Right cardiac atrium (tissue), 5 donors: ENCODE measurements at regions of chr6 and their contacts with region 1.

Region 1: GRCh38 chr6:133923938-133924593 is 29.0 kb upstream of the TBPL1 start:
- DNase-seq: peak; percentile 34 to 69 (median 58)
- ATAC-seq: peak; percentile 90 to 93
- H3K4me3 ChIP-seq: no peak overlapping the region
- H3K27ac ChIP-seq: no peak overlapping the region
- H3K4me1 ChIP-seq: no peaks in the 10 kb centered on the region
- H3K27me3 ChIP-seq: no peaks in the 10 kb centered on the region

Region 2: GRCh38 chr6:133906050-133906449 is 18.0 kb before region 1 on chr6:
- intact Hi-C with region 1: no loop called
- DNase-seq: no peak
- ATAC-seq: no peak
- H3K4me3 ChIP-seq: no peak overlapping the region
- H3K27ac ChIP-seq: no peak overlapping the region
- H3K4me1 ChIP-seq: no peaks in the 10 kb centered on the region
- H3K27me3 ChIP-seq: no peaks in the 10 kb centered on the region

Region 3: GRCh38 chr6:133973109-133973971 is 49.3 kb after region 1 on chr6:
- intact Hi-C with region 1: loop called in 1 of 4 experiments (anchors 10 kb)
- DNase-seq: no peak
- ATAC-seq: no peak
- H3K4me3 ChIP-seq: no peak overlapping the region
- H3K27ac ChIP-seq: no peak overlapping the region
- H3K4me1 ChIP-seq: no peaks in the 10 kb centered on the region
- H3K27me3 ChIP-seq: no peaks in the 10 kb centered on the region

Region 4: DNA sequence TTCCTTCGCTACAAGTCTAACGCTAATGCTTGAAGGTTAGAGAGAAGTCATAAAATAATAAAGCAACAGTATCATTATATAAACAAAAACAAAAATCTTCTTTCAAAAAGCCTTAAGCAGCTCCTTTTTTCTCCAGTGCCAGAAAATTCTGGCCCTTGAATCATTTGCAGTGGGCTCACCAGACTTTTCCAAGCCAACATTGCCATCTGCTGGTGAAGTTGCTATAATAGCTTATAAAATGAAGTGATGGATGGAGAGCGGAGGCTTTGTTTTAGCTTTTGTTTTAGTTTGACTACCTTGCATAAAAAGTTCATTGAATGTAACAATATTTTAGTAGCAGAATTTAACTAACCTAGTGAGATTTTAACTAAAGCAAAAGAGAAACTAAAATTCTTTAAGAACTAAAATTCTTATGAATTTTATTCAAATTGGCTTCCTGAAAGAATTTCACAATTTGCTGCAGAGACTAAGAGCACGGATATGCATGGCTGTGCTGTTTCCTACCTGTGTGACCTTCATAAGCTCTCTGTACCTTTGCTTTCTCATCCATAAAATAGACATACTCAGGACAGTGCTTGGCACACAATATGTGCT is 173.1 kb after region 1 on chr6:
- intact Hi-C with region 1: loop called (anchors 1 to 5 kb)
- DNase-seq: peak in 2 of 3 donors; percentile 39 to 65
- ATAC-seq: peak in 1 of 2 donors; percentile 74
- H3K4me3 ChIP-seq: no peak overlapping the region
- H3K27ac ChIP-seq: no peak overlapping the region
- H3K4me1 ChIP-seq: no peaks in the 10 kb centered on the region
- H3K27me3 ChIP-seq: no peaks in the 10 kb centered on the region

Region 5: DNA sequence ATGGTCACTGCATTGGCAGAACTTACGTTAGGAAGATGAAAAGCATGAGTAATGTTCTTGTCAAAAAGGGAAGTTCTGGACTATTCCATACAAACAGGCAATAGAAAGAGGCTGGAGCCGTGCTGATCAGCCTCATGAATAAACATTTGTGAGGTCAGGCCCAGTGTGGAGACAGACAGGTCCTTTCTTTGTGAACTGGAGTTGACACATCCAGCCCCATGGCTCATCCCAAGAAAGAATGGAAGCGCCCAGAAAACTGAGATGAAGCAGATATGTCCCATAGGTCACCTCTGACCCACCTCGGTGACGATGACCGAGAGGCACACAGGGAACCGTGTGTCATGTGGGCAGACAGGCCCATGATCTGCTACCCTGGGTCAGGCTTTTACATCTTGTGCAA is 669.8 kb after region 1 on chr6:
- intact Hi-C with region 1: no loop called
- DNase-seq: no peak
- ATAC-seq: no peak
- H3K4me3 ChIP-seq: no peak overlapping the region
- H3K27ac ChIP-seq: no peak overlapping the region
- H3K4me1 ChIP-seq: no peaks in the 10 kb centered on the region
- H3K27me3 ChIP-seq: no peaks in the 10 kb centered on the region